Activated B cell treated with CpG ODN at 0.5 μM for 24 hours (primary cell): ENCODE measurements at regions of chr19 and their contacts with region 1.

Region 1: GRCh38 chr19:6087074-6087571 is 23.2 kb downstream of the RFX2 start:
- DNase-seq: no peak
- ATAC-seq: peak; percentile 49
- H3K4me3 Mint-ChIP-seq: peak overlapping the region; percentile 73
- H3K27ac Mint-ChIP-seq: peak overlapping the region; percentile 91
- H3K4me1 Mint-ChIP-seq: peaks cover 32% of the 10 kb centered on the region
- H3K27me3 Mint-ChIP-seq: no peaks in the 10 kb centered on the region
- CTCF ChIP-seq: no peak

Region 2: DNA sequence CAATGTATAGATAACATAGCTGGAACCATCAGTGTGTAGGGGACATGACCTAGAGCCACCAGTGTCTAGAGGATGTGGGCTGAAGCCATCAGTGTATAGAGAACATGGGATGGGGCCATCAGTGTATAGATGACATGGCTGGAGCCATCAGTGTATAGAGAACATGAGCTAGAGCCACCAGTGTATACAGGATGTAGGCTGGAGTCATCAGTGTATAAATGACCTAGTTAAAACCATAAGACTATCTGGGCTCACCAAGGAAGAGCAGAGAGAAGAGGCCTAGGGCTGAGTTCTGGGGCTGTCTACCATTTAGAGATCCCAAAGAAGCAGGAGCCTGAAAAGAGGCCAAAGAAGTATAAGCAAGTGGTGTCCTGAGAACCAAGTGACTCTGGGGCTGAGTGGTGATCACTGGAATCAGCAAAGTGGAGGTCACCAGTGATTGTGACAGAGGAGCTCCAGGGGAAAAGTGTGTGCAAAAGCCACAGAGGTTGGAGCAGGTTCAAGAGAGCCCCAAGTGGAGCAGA is 17.8 kb before region 1 on chr19:
- CTCF ChIA-PET with region 1: interaction called, 3 read pairs
- POLR2A ChIA-PET with region 1: no interaction called
- intact Hi-C with region 1: loop called (anchors 2 kb)
- DNase-seq: no peak
- ATAC-seq: peak; percentile 62
- H3K4me3 Mint-ChIP-seq: peak overlapping the region; percentile 47
- H3K27ac Mint-ChIP-seq: peak overlapping the region; percentile 57
- H3K4me1 Mint-ChIP-seq: peaks cover 8% of the 10 kb centered on the region
- H3K27me3 Mint-ChIP-seq: peaks cover 5% of the 10 kb centered on the region
- CTCF ChIP-seq: no peak

Region 3: GRCh38 chr19:6076675-6077463 is 10.3 kb before region 1 on chr19:
- CTCF ChIA-PET with region 1: interaction called, 3 read pairs
- POLR2A ChIA-PET with region 1: interaction called, 13 read pairs
- intact Hi-C with region 1: no loop called
- DNase-seq: no peak
- ATAC-seq: no peak
- H3K4me3 Mint-ChIP-seq: no peak overlapping the region
- H3K27ac Mint-ChIP-seq: no peak overlapping the region
- H3K4me1 Mint-ChIP-seq: peaks cover 8% of the 10 kb centered on the region
- H3K27me3 Mint-ChIP-seq: no peaks in the 10 kb centered on the region
- CTCF ChIP-seq: no peak

Region 4: DNA sequence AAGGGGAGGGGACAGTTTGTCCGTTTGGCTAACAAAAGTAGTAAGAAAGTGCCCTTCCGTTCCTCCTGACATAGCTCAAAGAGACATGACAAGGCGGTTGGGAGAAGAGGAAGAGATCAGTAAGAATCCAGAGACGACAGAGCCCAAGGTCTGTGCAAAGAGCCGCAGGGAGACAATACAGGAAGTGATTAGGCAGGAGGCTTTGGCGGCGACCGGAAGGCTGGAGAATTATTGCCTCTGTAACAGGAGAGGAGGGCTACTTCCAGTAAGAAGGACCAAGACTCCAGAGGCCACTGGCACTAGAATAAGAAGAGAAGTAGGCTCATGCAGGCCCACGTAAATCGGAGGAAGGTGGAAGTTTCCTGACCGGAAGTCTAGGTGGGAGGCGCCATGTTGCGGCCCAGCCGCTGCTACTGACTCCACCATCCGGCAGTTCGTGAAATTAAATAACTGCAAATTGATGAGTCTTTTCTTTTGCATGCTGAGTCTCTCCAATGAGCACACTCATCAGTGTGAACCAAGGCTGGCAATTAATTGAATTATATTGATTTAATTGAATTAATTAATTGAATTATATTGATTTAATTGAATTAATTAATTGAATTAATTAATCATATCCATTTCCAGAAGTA is 13.3 kb after region 1 on chr19:
- CTCF ChIA-PET with region 1: interaction called, 3 read pairs
- POLR2A ChIA-PET with region 1: interaction called, 6 read pairs
- intact Hi-C with region 1: loop called (anchors 1 kb)
- DNase-seq: peak; percentile 37
- ATAC-seq: peak; percentile 87
- H3K4me3 Mint-ChIP-seq: peak overlapping the region; percentile 84
- H3K27ac Mint-ChIP-seq: peak overlapping the region; percentile 84
- H3K4me1 Mint-ChIP-seq: peaks cover 17% of the 10 kb centered on the region
- H3K27me3 Mint-ChIP-seq: no peaks in the 10 kb centered on the region
- CTCF ChIP-seq: no peak